ENCODE measurements at regions of chr3 and their contacts with region 1.

Region 1: GRCh38 chr3:157239082-157239704 is 79.2 kb upstream of the CCNL1 start:
- H3K4me3 ChIP-seq: no peak overlapping the region
- H3K27ac ChIP-seq: no peak overlapping the region
- H3K4me1 ChIP-seq: no peaks in the 10 kb centered on the region
- CTCF ChIP-seq: no peak

Region 2: GRCh38 chr3:157274644-157275137 is 35.5 kb after region 1 on chr3:
- CTCF ChIA-PET with region 1: no interaction called
- POLR2A ChIA-PET with region 1: interaction called, 11 read pairs
- H3K4me3 ChIP-seq: no peak overlapping the region
- H3K27ac ChIP-seq: no peak overlapping the region
- H3K4me1 ChIP-seq: no peaks in the 10 kb centered on the region
- CTCF ChIP-seq: no peak

Measured in HEK293 (cell line).